HEK293T (cell line): ENCODE measurements at regions of chr11 and their contacts with region 1.

Region 1: DNA sequence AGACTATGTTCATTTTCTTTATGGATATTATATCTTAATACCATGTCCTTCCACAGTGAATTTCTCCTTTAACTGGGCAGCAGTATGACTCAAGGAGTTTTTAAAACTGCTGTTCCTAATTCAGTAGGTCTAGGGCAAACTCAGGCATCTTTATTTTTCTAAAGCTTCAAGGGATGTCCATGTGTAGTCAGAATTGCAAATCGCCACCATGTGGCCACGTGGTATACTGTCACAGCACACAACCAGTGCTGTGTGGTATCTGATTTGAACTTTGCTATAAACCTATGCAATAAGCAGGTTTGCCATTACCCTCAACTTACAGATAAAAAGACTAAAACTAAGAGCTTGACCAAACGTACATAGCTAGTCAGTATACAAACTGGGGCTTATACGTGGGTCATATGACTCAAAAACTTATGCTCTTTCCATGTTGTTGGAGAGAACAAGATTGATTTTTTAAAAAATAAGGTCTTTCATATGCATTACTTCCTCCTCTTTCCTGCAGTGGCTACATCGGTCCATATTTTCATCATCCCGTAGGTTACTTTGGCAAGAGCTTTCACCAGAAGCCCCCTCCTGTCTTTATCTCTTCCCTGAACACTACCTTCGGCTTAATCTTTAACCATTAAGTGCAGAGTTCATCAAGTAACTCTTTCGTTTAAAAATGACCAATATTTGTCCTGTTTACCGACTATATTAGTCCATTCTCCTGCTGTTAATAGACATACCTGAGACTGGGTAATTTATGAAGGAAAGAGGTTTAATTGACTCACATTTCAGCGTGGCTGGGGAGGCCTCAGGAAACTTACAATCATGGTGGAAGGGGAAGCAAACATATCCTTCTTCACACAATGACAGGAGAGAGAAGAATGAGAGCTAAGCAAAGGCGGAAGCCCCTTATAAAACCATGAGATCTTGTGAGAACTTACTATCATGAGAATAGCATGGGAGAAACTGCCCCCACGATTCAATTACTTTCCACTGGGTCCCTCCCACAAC is 8.0 kb upstream of the HTATIP2 start:
- DNase-seq: peak; percentile 41

Region 2: DNA sequence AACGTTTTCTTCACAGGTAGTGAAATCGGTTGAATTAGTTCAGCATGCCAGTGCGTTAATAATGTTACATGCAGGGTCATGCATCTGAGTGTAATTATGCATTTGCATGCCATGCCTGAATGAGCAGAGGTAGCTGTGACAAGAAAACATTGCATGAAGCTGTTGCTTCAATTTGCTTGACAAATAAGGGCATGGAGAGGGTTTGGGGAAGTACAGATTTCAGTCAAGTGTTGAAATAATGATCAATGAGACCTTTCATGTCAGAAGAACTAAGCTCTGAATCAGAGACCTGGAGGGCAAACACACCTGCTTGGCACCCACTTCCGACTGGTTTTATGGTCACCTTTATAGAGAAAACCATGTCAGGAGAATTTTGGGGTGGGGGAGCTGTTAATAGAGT is 416.7 kb before region 1 on chr11:
- CTCF ChIA-PET with region 1: no interaction called
- POLR2A ChIA-PET with region 1: no interaction called
- DNase-seq: no peak

Region 3: DNA sequence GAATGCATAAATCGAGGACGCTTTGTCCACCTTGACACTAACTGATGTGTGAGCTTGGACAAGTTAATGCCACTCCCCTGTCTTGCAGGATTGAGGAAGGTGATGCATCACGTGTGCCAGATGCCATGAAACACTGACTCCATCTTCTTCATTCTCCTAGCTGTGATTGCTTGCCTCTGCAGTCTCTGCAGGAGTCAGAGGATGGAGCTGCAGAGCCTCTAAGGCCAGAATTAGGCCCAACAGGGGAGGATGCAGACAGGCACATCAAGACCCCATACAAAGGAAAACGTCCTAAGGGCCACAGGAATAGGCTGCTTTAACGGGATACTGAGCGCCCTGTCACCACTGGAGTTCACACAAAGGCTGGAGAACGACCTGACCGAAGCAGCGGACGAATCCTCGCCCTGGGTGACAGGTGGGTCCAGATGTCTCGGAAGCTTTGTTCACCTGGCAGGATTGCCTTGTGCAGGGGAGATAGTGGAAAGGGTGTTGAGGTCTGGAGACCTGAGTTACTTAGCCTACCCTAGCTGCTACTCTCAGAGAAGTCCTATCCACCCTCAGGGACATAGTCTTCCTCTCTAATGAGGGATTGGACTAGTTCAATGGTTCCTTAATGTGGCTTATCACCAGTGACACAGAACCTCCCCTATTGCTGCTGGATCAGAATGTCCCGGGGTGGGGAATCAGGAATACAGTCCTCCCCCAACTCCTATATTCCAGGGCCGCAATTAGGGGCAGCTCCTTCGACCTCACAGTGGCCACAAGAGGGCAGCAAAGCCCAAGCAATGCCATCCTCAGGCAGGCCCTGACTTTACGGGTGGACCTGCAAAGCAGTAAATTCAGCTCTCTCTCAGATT is 227.6 kb before region 1 on chr11:
- CTCF ChIA-PET with region 1: interaction called, 29 read pairs
- POLR2A ChIA-PET with region 1: no interaction called
- DNase-seq: peak; percentile 80

Region 4: GRCh38 chr11:20342347-20343141 is 13.0 kb before region 1 on chr11:
- CTCF ChIA-PET with region 1: interaction called, 10 read pairs
- POLR2A ChIA-PET with region 1: no interaction called
- DNase-seq: no peak

Region 5: DNA sequence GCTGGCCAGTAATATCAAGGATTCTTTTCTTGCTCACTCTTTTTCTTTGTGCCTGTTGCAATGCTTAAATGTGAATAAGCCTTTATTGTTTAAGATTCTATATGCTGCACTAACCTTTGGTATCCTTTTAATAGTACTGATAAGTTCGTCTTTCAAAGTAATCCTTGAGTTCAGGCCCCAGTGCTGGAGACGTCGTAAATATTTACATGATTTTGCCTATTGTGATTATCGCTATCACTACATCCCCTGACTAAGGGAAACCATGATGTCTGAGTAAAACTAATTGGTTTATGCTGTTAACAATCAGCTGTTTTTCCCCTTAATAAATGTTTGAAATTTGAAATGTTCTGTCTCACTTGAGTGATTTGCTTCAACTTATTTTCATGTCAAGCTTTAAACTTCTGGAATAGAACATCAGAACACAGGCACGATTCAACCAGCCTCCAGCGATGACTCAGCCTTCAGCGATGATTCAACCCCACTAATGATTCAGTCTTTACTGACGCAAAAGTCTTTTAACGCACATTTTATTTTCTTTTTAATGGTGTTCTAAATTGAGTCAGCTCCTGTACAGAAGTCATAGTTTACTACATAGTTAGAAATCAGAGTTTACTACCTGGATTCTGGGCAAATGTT is 11.9 kb after region 1 on chr11:
- CTCF ChIA-PET with region 1: interaction called, 13 read pairs
- POLR2A ChIA-PET with region 1: no interaction called
- DNase-seq: peak; percentile 28

Region 6: GRCh38 chr11:20397281-20397680 is 41.8 kb after region 1 on chr11:
- CTCF ChIA-PET with region 1: no interaction called
- POLR2A ChIA-PET with region 1: no interaction called
- DNase-seq: peak; percentile 35